ENCODE measurements at regions of chr1 and their contacts with region 1.

Region 1: DNA sequence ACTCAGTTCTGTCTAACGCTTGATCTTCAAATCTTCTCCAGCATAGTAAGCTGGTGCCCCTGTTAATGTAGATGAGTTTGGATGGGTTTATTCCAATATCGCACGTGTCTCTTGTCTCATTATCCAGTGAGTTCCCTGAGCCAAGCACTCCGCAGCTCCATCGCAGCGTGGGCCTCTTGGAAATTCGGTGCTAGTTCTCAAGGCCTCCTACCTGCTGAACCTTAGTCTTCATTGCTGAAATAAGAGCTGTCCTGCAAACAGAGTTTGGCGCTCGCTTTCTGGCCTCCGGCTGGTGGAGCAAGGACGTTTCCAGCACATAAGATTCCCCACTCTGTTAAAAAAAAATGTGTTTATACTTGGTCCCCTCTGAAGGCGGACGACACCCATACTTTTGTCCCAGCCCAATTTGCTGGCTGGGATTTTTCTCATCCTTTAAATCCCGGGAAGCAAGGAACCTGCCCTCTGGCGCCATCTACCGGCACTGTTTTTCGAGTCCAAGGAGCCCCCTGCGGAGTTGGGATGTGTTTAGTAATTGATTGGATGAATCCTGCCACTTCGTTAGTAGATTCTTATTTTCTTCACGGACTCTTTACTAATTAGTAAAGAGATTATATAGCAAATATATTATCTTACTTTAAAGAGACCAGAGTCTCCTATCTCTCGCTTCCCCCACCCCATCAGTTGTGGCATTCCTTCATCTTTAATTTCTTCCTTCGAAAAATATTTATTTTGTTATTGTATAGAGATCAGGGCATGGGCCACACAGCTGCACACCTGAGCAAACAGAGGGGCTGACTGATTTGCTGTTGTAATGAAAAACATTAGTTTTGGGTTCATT is 14.7 kb downstream of the JUN start:
- DNase-seq: no peak
- H3K4me3 ChIP-seq: no peak overlapping the region
- H3K27me3 ChIP-seq: no peaks in the 10 kb centered on the region
- CTCF ChIP-seq: peak; percentile 88

Region 2: DNA sequence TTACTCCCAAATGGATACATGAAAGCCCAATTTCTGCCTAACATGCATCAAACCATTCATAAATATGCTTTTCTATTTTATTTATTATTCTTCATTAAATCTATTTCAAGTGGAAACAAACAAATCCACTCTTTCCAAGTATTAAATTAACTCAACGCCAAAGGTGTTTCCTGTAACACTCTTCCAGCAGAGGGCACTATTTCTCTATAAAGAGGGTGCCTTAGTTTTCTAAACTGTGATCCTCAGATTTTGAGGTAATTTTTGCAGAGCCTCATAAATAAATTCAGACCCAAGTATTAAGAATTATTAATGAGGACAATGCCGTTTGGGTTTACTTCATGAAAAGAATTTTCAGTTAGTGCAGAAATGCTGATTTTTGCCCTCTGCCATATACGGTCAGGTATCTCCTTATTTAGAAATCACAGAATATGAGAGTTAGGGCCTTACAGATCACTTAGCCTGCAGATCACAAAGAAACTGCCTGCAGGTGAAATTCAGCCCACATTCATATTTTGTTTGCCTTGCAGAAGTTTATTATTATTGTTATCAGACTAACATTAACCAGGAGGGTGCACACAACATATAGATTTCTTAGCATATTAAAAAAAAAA is 29.2 kb before region 1 on chr1:
- CTCF ChIA-PET with region 1: interaction called, 41 read pairs
- POLR2A ChIA-PET with region 1: no interaction called
- DNase-seq: no peak
- H3K4me3 ChIP-seq: no peak overlapping the region
- H3K27me3 ChIP-seq: no peaks in the 10 kb centered on the region
- CTCF ChIP-seq: peak; percentile 66

Region 3: GRCh38 chr1:58746757-58747156 is 22.4 kb before region 1 on chr1:
- CTCF ChIA-PET with region 1: interaction called, 41 read pairs
- POLR2A ChIA-PET with region 1: no interaction called
- DNase-seq: no peak
- H3K4me3 ChIP-seq: no peak overlapping the region
- H3K27me3 ChIP-seq: no peaks in the 10 kb centered on the region
- CTCF ChIP-seq: no peak

Region 4: DNA sequence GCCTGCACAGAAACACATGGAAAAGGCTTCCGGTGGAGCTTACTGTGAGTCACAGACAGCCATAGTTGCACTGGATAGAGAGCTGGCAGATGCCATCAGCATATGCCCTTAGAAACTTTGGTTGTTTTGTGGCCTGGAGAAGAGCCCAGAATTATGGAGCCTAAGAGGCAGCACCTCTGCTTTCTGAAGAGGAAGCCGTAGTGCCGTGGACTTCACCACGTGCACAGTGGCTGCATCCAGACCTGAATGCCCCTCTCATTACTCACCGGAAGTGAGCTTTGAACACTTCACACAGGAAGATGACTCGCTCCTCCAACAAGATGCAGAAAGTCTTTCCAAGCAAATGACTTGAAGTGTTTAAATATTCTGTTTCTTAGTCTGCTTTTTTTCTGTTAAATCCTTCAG is 13.7 kb before region 1 on chr1:
- CTCF ChIA-PET with region 1: interaction called, 10 read pairs
- POLR2A ChIA-PET with region 1: interaction called, 4 read pairs
- DNase-seq: peak; percentile 99
- H3K4me3 ChIP-seq: no peak overlapping the region
- H3K27me3 ChIP-seq: no peaks in the 10 kb centered on the region
- CTCF ChIP-seq: no peak

Region 5: GRCh38 chr1:58779801-58780382 is 10.7 kb after region 1 on chr1:
- CTCF ChIA-PET with region 1: interaction called, 25 read pairs
- POLR2A ChIA-PET with region 1: interaction called, 3 read pairs
- DNase-seq: no peak
- H3K4me3 ChIP-seq: no peak overlapping the region; the same call in 1 of the 2 replicates
- H3K27me3 ChIP-seq: no peaks in the 10 kb centered on the region
- CTCF ChIP-seq: no peak

Measured in BJ (cell line).